ENCODE measurements at regions of chr7 and their contacts with region 1.

Region 1: DNA sequence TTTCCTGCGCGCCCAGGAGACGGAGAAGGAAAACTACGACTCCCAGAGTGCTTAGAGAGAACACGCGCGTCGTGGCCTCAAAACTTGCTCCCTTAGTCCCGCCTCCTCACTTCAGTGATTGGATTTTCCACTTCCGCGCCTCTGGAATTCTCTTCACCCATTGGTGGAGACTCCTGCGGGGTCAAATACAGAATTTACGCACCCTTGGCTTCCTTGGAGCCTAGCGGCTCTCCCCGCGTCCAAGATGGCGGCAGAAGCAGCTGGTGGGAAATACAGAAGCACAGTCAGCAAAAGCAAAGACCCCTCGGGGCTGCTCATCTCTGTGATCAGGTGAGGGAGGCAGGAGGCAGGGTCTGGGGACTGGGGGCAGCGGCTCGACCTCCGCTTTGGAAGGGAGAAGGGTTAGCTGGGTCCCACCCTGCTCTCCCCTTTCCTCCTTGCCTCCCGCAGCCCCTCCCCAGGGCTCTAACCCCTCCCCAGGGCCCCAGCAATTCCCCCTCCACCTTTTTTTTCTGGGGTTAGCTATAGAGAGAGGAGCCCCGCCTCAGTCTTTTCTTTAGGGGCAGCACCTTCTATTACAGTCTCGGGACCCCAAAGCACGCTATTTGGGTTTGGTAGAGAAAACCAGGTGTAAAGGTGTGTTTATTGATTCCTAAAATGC is at the start of gene EXOC4:
- DNase-seq: peak; percentile 98
- H3K4me3 Mint-ChIP-seq: peak within 1 kb of the TSS; percentile 95
- H3K27ac Mint-ChIP-seq: peak within 1 kb of the TSS; percentile 91
- H3K4me1 Mint-ChIP-seq: peaks cover 22% of the 10 kb centered on the region
- H3K27me3 Mint-ChIP-seq: no peaks in the 10 kb centered on the region
- total RNA-seq, gene EXOC4: 50.0 and 53.0 TPM in 2 replicates

Region 2: DNA sequence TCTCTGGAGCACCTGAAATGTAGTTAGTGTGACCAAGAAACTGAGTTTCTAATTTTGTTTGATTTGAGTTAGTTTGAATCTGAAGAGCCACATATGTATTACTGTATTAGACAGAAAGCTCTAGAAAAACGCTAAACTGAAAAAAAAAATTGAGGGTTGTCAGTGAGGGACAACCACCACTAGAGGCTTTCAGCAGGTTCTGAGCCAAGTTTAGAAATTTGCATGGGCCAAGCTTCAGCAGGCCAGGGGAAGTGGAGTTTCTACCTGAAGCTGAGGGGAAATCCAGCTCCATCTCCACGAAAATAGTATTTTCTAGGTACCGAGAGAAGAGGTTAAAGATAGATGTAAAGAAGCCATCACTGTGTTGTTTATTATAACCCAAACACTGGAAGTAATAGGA is 598.8 kb before region 1 on chr7:
- intact Hi-C with region 1: loop called (anchors 10 kb)
- DNase-seq: peak; percentile 73
- H3K4me3 Mint-ChIP-seq: peak overlapping the region; percentile 59
- H3K27ac Mint-ChIP-seq: peak overlapping the region; percentile 78
- H3K4me1 Mint-ChIP-seq: peaks cover 34% of the 10 kb centered on the region
- H3K27me3 Mint-ChIP-seq: no peaks in the 10 kb centered on the region

Region 3: GRCh38 chr7:133081599-133082389 is 171.2 kb before region 1 on chr7 and contains the start of gene CHCHD3:
- intact Hi-C with region 1: loop called (anchors 1 kb)
- DNase-seq: peak; percentile 99
- H3K4me3 Mint-ChIP-seq: peak within 1 kb of the TSS; percentile 95
- H3K27ac Mint-ChIP-seq: peak within 1 kb of the TSS; percentile 87
- H3K4me1 Mint-ChIP-seq: peaks cover 18% of the 10 kb centered on the region
- H3K27me3 Mint-ChIP-seq: peaks cover 3% of the 10 kb centered on the region
- total RNA-seq, gene CHCHD3: 74.5 and 76.2 TPM in 2 replicates

Region 4: GRCh38 chr7:133364959-133365690 is 112.1 kb after region 1 on chr7:
- intact Hi-C with region 1: no loop called
- DNase-seq: no peak
- H3K4me3 Mint-ChIP-seq: no peak overlapping the region
- H3K27ac Mint-ChIP-seq: no peak overlapping the region
- H3K4me1 Mint-ChIP-seq: peaks cover 5% of the 10 kb centered on the region
- H3K27me3 Mint-ChIP-seq: no peaks in the 10 kb centered on the region

Region 5: GRCh38 chr7:133481676-133482075 is 228.7 kb after region 1 on chr7:
- intact Hi-C with region 1: loop called (anchors 10 kb)
- DNase-seq: no peak
- H3K4me3 Mint-ChIP-seq: no peak overlapping the region
- H3K27ac Mint-ChIP-seq: no peak overlapping the region
- H3K4me1 Mint-ChIP-seq: peaks cover 33% of the 10 kb centered on the region
- H3K27me3 Mint-ChIP-seq: no peaks in the 10 kb centered on the region

Region 6: GRCh38 chr7:134126966-134127848 is 874.2 kb after region 1 on chr7 and contains the start of gene LRGUK:
- intact Hi-C with region 1: loop called (anchors 1 kb)
- DNase-seq: peak; percentile 94
- H3K4me3 Mint-ChIP-seq: peak within 1 kb of the TSS; percentile 90
- H3K27ac Mint-ChIP-seq: peak within 1 kb of the TSS; percentile 51
- H3K4me1 Mint-ChIP-seq: peaks cover 9% of the 10 kb centered on the region
- H3K27me3 Mint-ChIP-seq: peaks cover 34% of the 10 kb centered on the region
- total RNA-seq, gene LRGUK: 0.12 and 0.16 TPM in 2 replicates

Measured in activated CD4-positive, alpha-beta T cell treated with anti-CD3 and anti-CD28 coated beads, Interleukin-2, amount 10 ng/mL, durations not matched to agents 24 days and 14 days (primary cell).